H1 (cell line): ENCODE measurements at regions of chr10 and their contacts with region 1.

Region 1: DNA sequence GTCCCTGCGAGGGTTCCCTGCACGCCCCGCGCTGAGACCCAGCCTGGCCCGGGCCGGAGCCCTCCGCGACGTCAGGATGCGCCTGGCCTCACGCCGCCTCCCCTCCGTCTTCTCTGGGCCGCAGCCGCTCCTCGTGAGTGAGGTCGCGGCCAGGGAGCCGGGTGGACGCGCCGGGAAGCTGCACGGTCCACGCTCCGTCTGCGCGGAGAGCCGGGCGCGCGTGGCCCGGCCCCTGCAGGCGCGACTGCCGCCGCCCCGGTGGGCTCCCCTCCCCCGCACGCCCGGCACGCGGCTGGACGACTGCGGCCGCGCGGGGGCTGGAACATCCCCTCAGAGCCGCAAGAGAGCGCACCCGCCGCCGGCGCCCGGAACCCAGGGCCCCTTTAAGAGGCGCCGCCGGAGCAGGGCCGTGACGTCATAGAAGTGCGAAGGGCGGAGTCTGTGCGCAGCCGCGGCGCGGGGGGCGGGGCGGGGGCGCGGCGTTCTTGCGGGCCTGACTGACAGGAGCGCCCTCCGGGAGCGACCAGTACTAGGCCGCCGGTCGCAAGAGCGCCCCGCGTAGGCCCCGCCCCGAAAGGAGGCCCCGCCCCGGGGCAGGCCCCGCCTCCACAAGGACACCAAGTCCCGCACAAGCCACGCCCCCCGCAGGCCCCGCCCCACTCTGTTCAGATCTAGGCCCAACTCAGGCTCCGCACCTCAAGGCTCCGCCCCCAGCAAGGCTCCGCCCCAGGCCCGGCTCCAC is 445 bp upstream of the INPP5A start:
- DNase-seq: peak; percentile 98 to 100
- H3K4me3 ChIP-seq: peak overlapping the region; percentile 62 to 73 (median 67)
- H3K27ac ChIP-seq: peak overlapping the region; percentile 60; the same call in 1 of the 2 replicates
- H3K4me1 ChIP-seq: peaks cover 0 to 36% (median 21%) of the 10 kb centered on the region in 4 experiments; a peak in 6 of 7 replicates
- H3K27me3 ChIP-seq: peaks cover 0 to 9% (median 8%) of the 10 kb centered on the region in 4 experiments; a peak in 5 of 7 replicates
- CTCF ChIP-seq: peak in 2 of 3 experiments; percentile 21 to 33; a peak in 3 of 4 replicates
- EP300 ChIP-seq: peak in 1 of 2 experiments; percentile 29; a peak in 1 of 3 replicates
- POLR2A ChIP-seq: peak in 1 of 2 experiments; percentile 73; a peak in 2 of 3 replicates
- RAD21 ChIP-seq: peak in 1 of 2 experiments; percentile 36; a peak in 1 of 4 replicates

Region 2: GRCh38 chr10:132434405-132435005 is 102.6 kb before region 1 on chr10:
- CTCF ChIA-PET with region 1: no interaction called
- POLR2A ChIA-PET with region 1: no interaction called
- DNase-seq: no peak
- H3K4me3 ChIP-seq: no peak overlapping the region
- H3K27ac ChIP-seq: no peak overlapping the region
- H3K4me1 ChIP-seq: peaks cover 0 to 11% (median 1%) of the 10 kb centered on the region in 4 experiments; a peak in 4 of 7 replicates
- H3K27me3 ChIP-seq: no peaks in the 10 kb centered on the region
- CTCF ChIP-seq: no peak
- EP300 ChIP-seq: no peak
- POLR2A ChIP-seq: no peak
- RAD21 ChIP-seq: no peak

Region 3: GRCh38 chr10:132458593-132459300 is 78.4 kb before region 1 on chr10:
- CTCF ChIA-PET with region 1: interaction called, 10 read pairs
- POLR2A ChIA-PET with region 1: no interaction called
- DNase-seq: peak in 1 of 2 experiments; percentile 96
- H3K4me3 ChIP-seq: no peak overlapping the region
- H3K27ac ChIP-seq: no peak overlapping the region
- H3K4me1 ChIP-seq: no peaks in the 10 kb centered on the region
- H3K27me3 ChIP-seq: peaks cover 0 to 4% (median 0%) of the 10 kb centered on the region in 4 experiments; a peak in 2 of 7 replicates
- CTCF ChIP-seq: peak in 2 of 3 experiments; percentile 86 to 92; a peak in 3 of 4 replicates
- EP300 ChIP-seq: no peak
- POLR2A ChIP-seq: no peak
- RAD21 ChIP-seq: peak; percentile 91 to 92

Region 4: DNA sequence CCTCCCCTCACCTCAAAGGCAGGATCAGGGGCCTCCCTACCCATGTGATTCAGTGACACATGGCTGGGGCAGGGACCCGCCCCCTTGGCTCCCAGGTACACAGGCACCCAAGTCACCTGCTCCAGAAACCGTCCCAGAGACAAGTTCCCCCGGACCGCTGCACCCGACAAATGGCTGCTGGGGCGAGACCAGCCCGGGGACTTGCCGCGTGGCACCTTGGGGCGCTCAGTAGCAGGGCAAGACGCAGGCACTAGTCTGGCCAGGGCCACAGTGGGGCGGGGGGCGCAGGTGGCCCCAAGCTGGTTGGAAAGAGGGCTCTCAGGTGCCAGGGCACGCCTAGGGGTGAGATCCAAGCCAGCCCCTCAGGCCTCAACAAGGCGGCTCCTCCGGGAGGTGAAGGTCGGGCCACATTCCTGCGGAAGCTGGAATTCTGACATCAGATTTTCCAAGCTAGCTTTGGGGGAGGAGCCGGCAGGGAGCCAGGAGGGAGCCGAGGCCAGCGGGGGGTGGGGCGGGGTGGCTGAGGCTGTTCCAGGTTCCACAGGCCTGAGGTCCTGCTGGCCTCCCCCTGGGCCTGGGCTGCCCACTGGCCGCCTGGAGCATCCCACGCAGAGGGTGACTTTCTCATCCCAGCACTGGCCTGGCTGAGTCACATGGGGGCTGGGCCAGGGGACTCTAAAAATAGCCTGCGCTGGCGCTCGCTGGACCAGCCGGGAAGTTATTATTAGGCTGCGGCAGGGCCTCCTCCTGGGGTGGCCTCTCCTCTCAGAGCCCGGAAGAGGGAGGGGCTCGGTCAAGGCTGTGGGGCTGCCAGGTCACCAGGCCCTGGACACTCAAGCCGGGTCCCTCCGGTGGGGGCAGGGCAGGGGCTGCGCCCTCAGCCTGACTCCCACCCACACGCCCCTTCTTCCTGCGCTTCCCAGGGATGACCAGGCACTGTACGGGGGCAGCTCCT is 20.1 kb before region 1 on chr10:
- CTCF ChIA-PET with region 1: interaction called, 6 read pairs
- POLR2A ChIA-PET with region 1: interaction called, 20 read pairs
- DNase-seq: peak; percentile 47 to 82
- H3K4me3 ChIP-seq: peak overlapping the region; percentile 45 to 73 (median 57); a peak in 7 of 8 replicates
- H3K27ac ChIP-seq: peak overlapping the region; percentile 66; the same call in 1 of the 2 replicates
- H3K4me1 ChIP-seq: peaks cover 11 to 34% (median 24%) of the 10 kb centered on the region in 4 experiments
- H3K27me3 ChIP-seq: peaks cover 4 to 30% (median 15%) of the 10 kb centered on the region in 4 experiments; a peak in 6 of 7 replicates
- CTCF ChIP-seq: no peak
- EP300 ChIP-seq: peak in 1 of 2 experiments; percentile 39; a peak in 1 of 3 replicates
- POLR2A ChIP-seq: peak in 1 of 2 experiments; percentile 41; a peak in 1 of 3 replicates
- RAD21 ChIP-seq: no peak

Region 5: DNA sequence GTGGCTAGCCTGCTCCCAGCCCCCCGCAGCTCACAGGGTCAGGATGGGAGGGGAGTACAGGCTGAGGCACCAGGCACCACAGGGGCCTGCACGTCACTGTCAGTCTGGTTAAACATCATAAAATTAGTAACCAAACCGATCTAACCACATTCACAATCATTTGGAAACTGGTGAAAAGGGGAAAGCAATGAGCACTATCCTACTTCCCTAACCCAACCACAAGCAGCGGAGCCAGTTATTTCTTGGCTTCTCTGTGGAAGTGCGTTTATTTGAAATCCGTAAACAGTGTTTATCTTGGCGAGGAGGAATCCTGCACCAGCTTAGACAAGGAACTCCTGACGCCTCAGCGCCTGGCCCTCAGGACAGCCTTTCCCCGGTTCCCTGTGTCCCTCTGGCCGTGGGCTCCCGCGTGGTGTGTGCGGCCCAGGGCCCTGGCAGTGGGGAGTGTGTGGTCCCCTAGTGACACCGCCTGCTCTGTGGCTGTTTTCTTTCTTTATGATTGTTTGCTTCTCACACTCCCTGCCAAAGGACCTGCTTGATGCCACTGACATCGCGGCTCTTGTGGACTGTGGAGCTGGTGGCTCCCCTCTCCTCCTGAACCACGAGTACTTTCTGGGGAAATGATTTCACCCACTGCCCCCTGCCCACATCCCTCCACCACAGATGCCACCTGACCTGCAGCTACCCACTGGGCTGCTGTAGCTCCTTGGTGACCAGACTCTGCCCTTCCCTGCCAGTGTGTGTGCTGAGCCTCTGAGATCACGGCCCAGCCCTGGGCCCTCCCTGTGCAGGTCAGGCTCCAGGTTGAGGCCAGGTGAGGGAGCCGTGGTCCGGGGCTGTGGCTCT is 38.4 kb after region 1 on chr10:
- CTCF ChIA-PET with region 1: interaction called, 11 read pairs
- POLR2A ChIA-PET with region 1: interaction called, 3 read pairs
- DNase-seq: no peak
- H3K4me3 ChIP-seq: no peak overlapping the region
- H3K27ac ChIP-seq: no peak overlapping the region
- H3K4me1 ChIP-seq: peaks cover 7 to 34% (median 22%) of the 10 kb centered on the region in 4 experiments
- H3K27me3 ChIP-seq: no peaks in the 10 kb centered on the region; a peak in 1 of 7 replicates
- CTCF ChIP-seq: no peak
- EP300 ChIP-seq: no peak
- POLR2A ChIP-seq: no peak
- RAD21 ChIP-seq: no peak